Dorsolateral prefrontal cortex (tissue), 120 donors: ENCODE measurements at regions of chr3 and their contacts with region 1.

Region 1: GRCh38 chr3:196073188-196073838 is 8.6 kb downstream of the TFRC start:
- DNase-seq: peak in 8 of 10 donors; percentile 42 to 75 (median 55)
- H3K4me3 ChIP-seq: no peak overlapping the region
- H3K27ac ChIP-seq: peak overlapping the region in 7 of 59 donors; percentile 1 to 42 (median 10)
- H3K27me3 ChIP-seq: no peaks in the 10 kb centered on the region
- CTCF ChIP-seq: peak; percentile 61 to 92 (median 83)

Region 2: GRCh38 chr3:195475614-195476013 is 597.7 kb before region 1 on chr3:
- intact Hi-C with region 1: no loop called
- DNase-seq: no peak
- H3K4me3 ChIP-seq: no peak overlapping the region
- H3K27ac ChIP-seq: no peak overlapping the region
- H3K27me3 ChIP-seq: no peaks in the 10 kb centered on the region
- CTCF ChIP-seq: no peak

Region 3: GRCh38 chr3:196096382-196096953 is 23.2 kb after region 1 on chr3:
- intact Hi-C with region 1: no loop called
- DNase-seq: peak in 6 of 10 donors; percentile 24 to 58 (median 42)
- H3K4me3 ChIP-seq: peak overlapping the region in 1 of 59 donors; percentile 1
- H3K27ac ChIP-seq: peak overlapping the region in 28 of 59 donors; percentile 7 to 67 (median 38)
- H3K27me3 ChIP-seq: no peaks in the 10 kb centered on the region
- CTCF ChIP-seq: no peak

Region 4: GRCh38 chr3:196195664-196196265 is 122.5 kb after region 1 on chr3:
- intact Hi-C with region 1: loop called (anchors 1 to 2 kb)
- DNase-seq: no peak
- H3K4me3 ChIP-seq: no peak overlapping the region
- H3K27ac ChIP-seq: no peak overlapping the region
- H3K27me3 ChIP-seq: no peaks in the 10 kb centered on the region
- CTCF ChIP-seq: no peak